Esophagus muscularis mucosa (tissue), 4 donors: ENCODE measurements at regions of chr3 and their contacts with region 1.

Region 1: GRCh38 chr3:124935264-124935663 is 713 bp upstream of the MUC13 start:
- DNase-seq: no peak
- H3K4me3 ChIP-seq: no peak overlapping the region
- H3K27ac ChIP-seq: no peak overlapping the region
- H3K4me1 ChIP-seq: peaks cover 0 to 2% (median 0%) of the 10 kb centered on the region in 4 donors
- H3K27me3 ChIP-seq: no peaks in the 10 kb centered on the region
- CTCF ChIP-seq: no peak
- EP300 ChIP-seq: no peak
- POLR2A ChIP-seq: no peak

Region 2: DNA sequence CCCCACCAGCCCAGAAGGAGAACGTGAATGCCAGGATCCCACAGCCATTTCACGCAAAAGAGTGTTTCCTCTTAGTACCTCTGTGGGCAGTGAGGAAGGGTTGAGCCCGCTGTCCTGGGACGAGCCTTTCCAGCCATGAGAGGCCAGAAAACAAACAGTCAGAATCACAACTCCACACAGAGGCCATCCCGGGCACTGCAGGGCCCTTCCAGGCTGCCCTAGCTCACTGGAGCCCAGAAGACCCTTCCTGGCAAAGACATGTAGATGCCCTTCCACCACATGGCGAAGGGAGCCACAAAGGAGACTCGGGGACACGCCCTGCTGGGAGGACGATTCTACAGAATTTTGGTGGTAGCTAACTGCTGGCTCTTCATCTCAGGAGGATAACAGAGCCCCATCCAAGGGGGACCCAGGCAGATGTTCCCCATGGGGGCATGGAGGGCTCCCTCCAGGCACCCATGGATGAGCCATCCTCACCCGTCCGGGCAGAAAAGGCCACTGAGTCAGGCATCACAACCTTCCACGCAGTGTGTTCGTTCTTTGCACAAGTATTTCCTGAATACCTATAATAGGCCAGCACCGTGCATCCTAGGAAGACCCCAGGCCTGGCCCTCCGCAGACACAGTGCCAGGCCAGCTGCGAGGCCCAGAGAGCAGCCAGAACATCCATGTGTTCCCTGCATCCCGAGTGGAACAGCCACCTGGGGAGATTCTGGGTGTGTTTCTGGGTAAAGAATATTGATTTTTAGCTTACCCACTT is 230.1 kb after region 1 on chr3:
- intact Hi-C with region 1: loop called (anchors 10 kb)
- DNase-seq: no peak
- H3K4me3 ChIP-seq: no peak overlapping the region
- H3K27ac ChIP-seq: no peak overlapping the region
- H3K4me1 ChIP-seq: peaks cover 7 to 35% (median 18%) of the 10 kb centered on the region in 4 donors
- H3K27me3 ChIP-seq: no peaks in the 10 kb centered on the region
- CTCF ChIP-seq: peak; percentile 46 to 69 (median 50)
- EP300 ChIP-seq: no peak
- POLR2A ChIP-seq: no peak